Activated CD4-positive, alpha-beta memory T cell treated with anti-CD3 and anti-CD28 coated beads for 36 hours (primary cell): ENCODE measurements at regions of chr6 and their contacts with region 1.

Region 1: GRCh38 chr6:143721642-143722041 is 43.9 kb downstream of the PHACTR2 start:
- DNase-seq: no peak
- H3K4me3 Mint-ChIP-seq: no peak overlapping the region
- H3K27ac Mint-ChIP-seq: no peak overlapping the region
- H3K4me1 Mint-ChIP-seq: peaks cover 7% of the 10 kb centered on the region
- H3K27me3 Mint-ChIP-seq: no peaks in the 10 kb centered on the region

Region 2: GRCh38 chr6:143759666-143760065 is 38.0 kb after region 1 on chr6:
- CTCF ChIA-PET with region 1: no interaction called
- POLR2A ChIA-PET with region 1: no interaction called
- intact Hi-C with region 1: loop called (anchors 5 kb)
- DNase-seq: no peak
- H3K4me3 Mint-ChIP-seq: no peak overlapping the region
- H3K27ac Mint-ChIP-seq: no peak overlapping the region
- H3K4me1 Mint-ChIP-seq: peaks cover 6% of the 10 kb centered on the region
- H3K27me3 Mint-ChIP-seq: no peaks in the 10 kb centered on the region